Activated T-helper 2 cell treated with anti-CD3 and anti-CD28 coated beads, Interferon-gamma antibody, Interleukin-2, Interleukin-4, amounts not matched to agents 10 μg/mL and 5 μg/mL and 100 μg/mL, durations not matched to agents 14 hours and 24 hours and 36 hours (primary cell): ENCODE measurements at regions of chr3 and their contacts with region 1.

Region 1: GRCh38 chr3:58683466-58683865 is 16.9 kb upstream of the FAM3D start:
- DNase-seq: no peak
- H3K4me3 Mint-ChIP-seq: no peak overlapping the region
- H3K27ac Mint-ChIP-seq: no peak overlapping the region
- H3K4me1 Mint-ChIP-seq: peaks cover 9% of the 10 kb centered on the region
- H3K27me3 Mint-ChIP-seq: peaks cover 3% of the 10 kb centered on the region

Region 2: GRCh38 chr3:58697561-58697960 is 14.1 kb after region 1 on chr3:
- intact Hi-C with region 1: loop called (anchors 2 kb)
- DNase-seq: no peak
- H3K4me3 Mint-ChIP-seq: no peak overlapping the region
- H3K27ac Mint-ChIP-seq: no peak overlapping the region
- H3K4me1 Mint-ChIP-seq: peaks cover 10% of the 10 kb centered on the region
- H3K27me3 Mint-ChIP-seq: peaks cover 8% of the 10 kb centered on the region

Region 3: GRCh38 chr3:58874795-58875194 is 191.3 kb after region 1 on chr3:
- intact Hi-C with region 1: loop called (anchors 10 kb)
- DNase-seq: no peak
- H3K4me3 Mint-ChIP-seq: no peak overlapping the region
- H3K27ac Mint-ChIP-seq: peak overlapping the region; percentile 88
- H3K4me1 Mint-ChIP-seq: peaks cover 16% of the 10 kb centered on the region
- H3K27me3 Mint-ChIP-seq: peaks cover 11% of the 10 kb centered on the region